Heart left ventricle (tissue), 16 donors: ENCODE measurements at regions of chr9 and their contacts with region 1.

Region 1: DNA sequence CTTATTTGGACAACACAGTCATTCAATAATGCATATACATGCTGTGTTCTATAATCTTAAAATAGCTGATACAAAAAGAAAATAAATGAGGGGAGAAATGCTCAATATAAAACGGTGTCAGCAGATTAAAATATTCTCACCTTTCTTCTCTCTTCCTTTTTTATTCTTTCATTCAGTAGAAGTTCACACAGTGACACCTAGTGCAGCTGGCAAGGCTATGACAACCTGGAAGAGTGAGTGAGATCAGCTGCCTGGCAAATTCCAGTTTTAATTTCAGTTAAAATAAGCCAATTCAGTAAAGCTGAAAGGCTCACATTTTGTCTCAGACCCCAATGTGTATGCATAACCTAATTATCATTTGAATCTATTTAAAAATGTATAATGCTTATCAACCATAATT is 150.3 kb downstream of the RASEF start:
- DNase-seq: no peak
- ATAC-seq: no peak
- H3K4me3 ChIP-seq: no peak overlapping the region
- H3K27ac ChIP-seq: no peak overlapping the region
- H3K4me1 ChIP-seq: no peaks in the 10 kb centered on the region
- H3K27me3 ChIP-seq: peaks cover 0 to 15% (median 0%) of the 10 kb centered on the region in 9 donors
- CTCF ChIP-seq: no peak
- POLR2A ChIP-seq: no peak

Region 2: GRCh38 chr9:82320566-82320965 is 592.1 kb before region 1 on chr9:
- intact Hi-C with region 1: loop called in 1 of 10 experiments (anchors 5 kb)
- DNase-seq: no peak
- ATAC-seq: no peak
- H3K4me3 ChIP-seq: no peak overlapping the region
- H3K27ac ChIP-seq: no peak overlapping the region
- H3K4me1 ChIP-seq: no peaks in the 10 kb centered on the region
- H3K27me3 ChIP-seq: no peaks in the 10 kb centered on the region
- CTCF ChIP-seq: no peak
- POLR2A ChIP-seq: no peak

Region 3: DNA sequence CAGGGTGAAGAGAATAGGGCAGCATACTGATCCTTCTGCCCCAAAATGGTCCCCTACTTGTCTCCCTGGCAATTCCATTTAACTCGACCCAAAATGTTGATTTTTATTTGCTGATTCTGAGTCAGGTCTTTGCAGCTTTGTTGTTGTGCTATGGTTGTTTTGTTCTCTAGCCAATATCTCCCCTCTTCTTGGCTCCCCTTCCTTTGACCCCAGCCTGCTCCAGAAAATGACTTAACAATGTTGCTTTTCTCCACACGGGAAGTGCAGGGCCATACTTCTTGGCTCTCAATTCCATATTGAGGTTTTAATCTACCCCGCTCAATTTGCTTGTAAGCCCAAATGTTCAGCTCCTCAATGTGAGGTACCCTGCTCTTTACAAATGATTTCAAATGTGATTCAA is 179.7 kb before region 1 on chr9:
- intact Hi-C with region 1: no loop called
- DNase-seq: no peak
- ATAC-seq: no peak
- H3K4me3 ChIP-seq: no peak overlapping the region
- H3K27ac ChIP-seq: no peak overlapping the region
- H3K4me1 ChIP-seq: no peaks in the 10 kb centered on the region
- H3K27me3 ChIP-seq: no peaks in the 10 kb centered on the region
- CTCF ChIP-seq: no peak
- POLR2A ChIP-seq: no peak

Region 4: DNA sequence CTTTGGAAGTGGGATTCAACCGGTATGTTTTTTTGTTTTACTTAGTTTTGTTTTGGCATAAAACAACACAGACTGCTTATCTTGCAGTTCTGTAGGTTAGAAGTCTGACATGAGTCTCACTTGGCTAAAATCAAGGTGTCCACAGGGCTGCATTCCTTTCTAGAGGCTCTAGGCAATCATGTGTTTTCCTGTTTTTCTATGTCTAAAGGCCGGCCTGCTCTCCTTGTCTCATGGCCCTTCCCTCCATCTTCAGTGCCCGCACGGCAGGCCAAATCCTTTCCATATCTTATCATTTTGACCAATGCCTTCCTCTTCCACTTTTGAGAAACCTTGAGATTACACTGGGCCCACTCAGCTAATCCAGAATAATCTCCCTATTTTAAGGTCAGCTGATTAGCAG is 50.7 kb before region 1 on chr9:
- intact Hi-C with region 1: no loop called
- DNase-seq: no peak
- ATAC-seq: no peak
- H3K4me3 ChIP-seq: no peak overlapping the region
- H3K27ac ChIP-seq: no peak overlapping the region
- H3K4me1 ChIP-seq: no peaks in the 10 kb centered on the region
- H3K27me3 ChIP-seq: no peaks in the 10 kb centered on the region
- CTCF ChIP-seq: no peak
- POLR2A ChIP-seq: no peak